ENCODE measurements at regions of chr19 and their contacts with region 1.

Region 1: DNA sequence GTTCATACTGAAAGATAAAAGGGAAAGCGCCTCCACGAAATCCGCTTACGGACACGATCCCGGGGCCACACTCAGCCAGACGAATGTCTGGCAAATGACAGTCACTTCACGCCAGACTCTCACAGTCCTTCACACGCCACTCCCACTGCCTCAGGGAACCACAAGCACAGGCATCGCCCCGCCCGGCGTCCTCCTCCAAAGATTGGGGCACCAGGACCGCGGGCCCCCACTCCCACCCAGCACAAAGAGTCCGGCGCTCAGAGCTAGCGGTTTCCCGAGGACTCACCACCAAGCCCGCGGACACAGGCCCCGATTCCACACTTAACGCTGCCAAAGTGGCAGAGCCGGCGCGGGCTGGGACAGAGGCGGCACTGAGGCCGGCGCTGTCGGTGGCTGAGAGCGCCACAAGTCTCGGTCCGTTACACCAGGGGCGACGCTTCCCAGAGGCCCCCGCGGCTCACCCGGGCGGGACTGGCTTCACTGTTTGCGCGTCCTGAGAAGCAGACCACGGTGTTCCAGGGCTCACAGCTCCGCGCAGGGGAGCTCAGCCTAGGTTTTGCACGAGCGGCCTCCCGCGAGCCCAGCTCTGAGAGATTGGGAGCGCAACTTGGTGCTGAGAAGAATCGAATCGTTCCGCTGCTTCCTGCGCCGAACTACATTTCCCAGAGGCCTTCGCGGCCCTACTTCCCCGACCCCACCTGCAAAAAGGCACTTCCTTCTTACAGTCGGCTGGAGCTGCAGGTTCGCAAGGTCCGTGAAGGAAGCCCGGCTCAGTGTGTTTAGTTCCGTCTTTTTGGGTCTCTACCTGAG is at the start of gene ZNF569:
- DNase-seq: peak; percentile 85
- H3K4me3 Mint-ChIP-seq: peak within 1 kb of the TSS; percentile 92
- H3K27ac Mint-ChIP-seq: peak within 1 kb of the TSS; percentile 93
- H3K4me1 Mint-ChIP-seq: peaks cover 27% of the 10 kb centered on the region
- H3K27me3 Mint-ChIP-seq: no peaks in the 10 kb centered on the region
- total RNA-seq, gene ZNF569: 2.7 and 3.7 TPM in 2 replicates

Region 2: GRCh38 chr19:36114763-36115452 is 1352.1 kb before region 1 on chr19 and contains the start of gene POLR2I:
- intact Hi-C with region 1: loop called (anchors 10 kb)
- DNase-seq: peak; percentile 98
- H3K4me3 Mint-ChIP-seq: peak within 1 kb of the TSS; percentile 98
- H3K27ac Mint-ChIP-seq: peak within 1 kb of the TSS; percentile 92
- H3K4me1 Mint-ChIP-seq: peaks cover 38% of the 10 kb centered on the region
- H3K27me3 Mint-ChIP-seq: peaks cover 1% of the 10 kb centered on the region
- total RNA-seq, gene POLR2I: 76.3 and 92.4 TPM in 2 replicates

Region 3: DNA sequence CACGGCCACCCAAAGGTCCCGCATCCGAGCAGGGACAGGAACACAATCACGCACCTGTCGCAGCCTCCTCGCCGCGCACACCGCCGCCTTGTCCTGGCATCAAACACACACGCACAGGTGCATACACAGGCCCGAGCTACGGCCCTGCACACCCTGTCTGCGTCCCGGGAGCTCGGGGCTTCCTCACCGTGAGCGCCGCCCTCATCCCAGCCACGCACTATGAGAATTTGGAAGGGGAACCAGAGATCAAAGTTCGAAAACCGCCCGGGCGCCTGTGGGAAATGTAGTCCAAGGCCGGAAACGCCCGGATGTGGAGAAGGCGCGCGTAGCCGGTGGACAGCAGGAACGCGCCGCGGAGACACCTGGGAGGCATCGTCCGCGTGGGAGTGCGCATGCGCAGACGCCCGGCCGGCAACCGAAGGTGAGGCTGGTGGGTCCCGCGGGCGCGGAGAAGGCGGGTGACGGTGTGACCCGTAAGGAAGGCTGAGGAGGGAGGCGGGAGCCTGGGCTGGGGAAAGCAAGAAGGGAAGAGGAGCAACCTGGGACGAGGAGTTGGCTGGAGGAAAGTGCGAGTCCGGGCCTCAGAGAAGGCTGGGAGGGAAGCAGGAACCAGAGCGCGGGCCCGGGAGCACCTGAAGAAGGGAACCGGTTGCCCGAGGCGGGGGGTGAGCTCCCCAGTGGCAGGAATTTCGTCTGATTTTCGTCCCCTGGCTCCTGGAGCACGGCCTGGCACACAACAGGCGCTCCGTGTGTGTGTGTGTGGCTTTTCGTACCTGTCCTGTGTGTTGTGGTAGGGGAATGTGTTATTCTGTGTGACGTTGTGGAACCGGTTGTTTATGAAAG is 779.6 kb before region 1 on chr19 and contains the start of gene ZNF567:
- intact Hi-C with region 1: loop called (anchors 1 kb)
- DNase-seq: peak; percentile 97
- H3K4me3 Mint-ChIP-seq: peak within 1 kb of the TSS; percentile 95
- H3K27ac Mint-ChIP-seq: peak within 1 kb of the TSS; percentile 91
- H3K4me1 Mint-ChIP-seq: peaks cover 24% of the 10 kb centered on the region
- H3K27me3 Mint-ChIP-seq: peaks cover 2% of the 10 kb centered on the region
- total RNA-seq, gene ZNF567: 5.8 and 8.5 TPM in 2 replicates

Region 4: DNA sequence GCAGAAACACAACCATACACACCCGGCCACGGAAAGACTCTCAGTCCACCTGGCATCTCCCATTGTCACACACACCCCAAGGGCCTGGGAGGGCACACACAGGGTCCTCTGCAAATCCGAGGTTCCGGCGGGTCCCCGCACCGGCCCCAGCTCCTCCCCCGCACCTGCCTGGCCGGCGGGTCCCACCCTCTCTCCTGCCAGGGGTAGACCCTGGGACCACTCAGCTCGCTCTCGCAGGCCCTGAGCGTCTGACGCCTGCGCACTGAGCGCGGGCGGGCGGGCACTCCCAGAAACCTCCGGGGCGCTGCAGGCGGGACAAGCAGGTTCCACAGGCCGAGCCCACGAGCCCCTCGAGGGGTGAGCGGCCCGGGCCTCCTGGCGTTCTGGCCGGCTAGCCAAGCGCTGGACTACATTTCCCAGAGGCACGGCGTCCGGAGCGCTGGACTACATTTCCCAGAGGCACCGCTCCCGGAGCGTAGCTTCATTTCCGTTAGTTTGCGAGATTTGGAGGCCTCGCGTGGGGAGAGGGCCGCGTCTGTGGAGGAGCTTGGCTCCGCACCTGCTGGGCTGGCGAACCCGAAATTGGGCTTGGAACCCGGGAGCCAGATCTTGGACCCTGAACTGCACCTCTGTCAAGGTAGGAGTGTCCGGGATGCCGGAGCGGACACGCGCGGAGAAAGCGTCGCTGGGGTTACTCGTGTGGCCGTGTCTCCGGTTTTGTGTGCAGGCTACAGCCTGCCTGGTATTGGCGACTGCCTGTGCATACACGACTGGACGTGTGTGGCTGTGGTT is 388.9 kb before region 1 on chr19 and contains the start of gene ZNF420:
- intact Hi-C with region 1: loop called (anchors 1 kb)
- DNase-seq: peak; percentile 85
- H3K4me3 Mint-ChIP-seq: peak within 1 kb of the TSS; percentile 93
- H3K27ac Mint-ChIP-seq: peak within 1 kb of the TSS; percentile 90
- H3K4me1 Mint-ChIP-seq: peaks cover 21% of the 10 kb centered on the region
- H3K27me3 Mint-ChIP-seq: no peaks in the 10 kb centered on the region
- total RNA-seq, gene ZNF420: 5.9 and 9.1 TPM in 2 replicates

Region 5: DNA sequence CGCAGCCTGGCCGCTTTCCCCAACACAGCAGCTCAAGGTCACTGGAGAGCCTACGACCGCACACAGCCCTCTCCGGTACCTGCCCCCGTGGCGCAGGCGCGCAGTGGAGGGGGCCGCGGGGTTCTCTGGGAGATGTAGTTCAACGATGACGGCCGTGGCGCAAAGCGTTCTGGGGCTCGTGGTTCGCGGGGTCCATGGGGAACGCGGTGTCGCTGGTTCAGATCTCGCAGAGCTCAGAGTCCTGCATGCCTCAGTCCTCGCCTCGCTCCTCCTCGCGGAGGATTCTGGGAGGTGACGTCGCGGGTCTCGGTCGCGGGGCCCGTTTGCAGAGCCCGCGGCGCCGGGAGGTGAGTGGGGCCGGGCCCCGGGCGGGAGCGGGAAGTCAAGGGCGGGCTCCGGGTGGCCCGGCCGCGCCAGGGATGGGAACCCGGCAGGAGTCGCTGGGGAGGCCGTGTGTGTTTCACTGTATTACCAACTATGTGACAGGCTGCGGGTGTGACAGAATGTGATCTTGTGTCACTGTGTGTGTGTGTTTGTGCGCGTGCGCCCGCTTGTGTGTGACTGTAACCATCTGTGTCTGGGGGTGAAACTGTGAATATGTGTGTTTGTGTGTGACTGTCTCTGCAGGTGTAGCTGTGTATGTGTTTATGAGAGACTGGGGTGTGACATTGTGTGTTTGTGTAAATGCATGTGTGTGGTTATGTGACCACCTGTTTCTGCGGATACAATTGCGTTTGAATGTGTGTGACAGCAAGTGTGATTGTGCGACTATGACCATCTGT is 95.9 kb before region 1 on chr19 and contains the start of gene ZNF527:
- intact Hi-C with region 1: loop called (anchors 1 kb)
- DNase-seq: peak; percentile 96
- H3K4me3 Mint-ChIP-seq: peak within 1 kb of the TSS; percentile 99
- H3K27ac Mint-ChIP-seq: peak within 1 kb of the TSS; percentile 87
- H3K4me1 Mint-ChIP-seq: peaks cover 13% of the 10 kb centered on the region
- H3K27me3 Mint-ChIP-seq: no peaks in the 10 kb centered on the region
- total RNA-seq, gene ZNF527: 3.9 and 4.5 TPM in 2 replicates

Region 6: DNA sequence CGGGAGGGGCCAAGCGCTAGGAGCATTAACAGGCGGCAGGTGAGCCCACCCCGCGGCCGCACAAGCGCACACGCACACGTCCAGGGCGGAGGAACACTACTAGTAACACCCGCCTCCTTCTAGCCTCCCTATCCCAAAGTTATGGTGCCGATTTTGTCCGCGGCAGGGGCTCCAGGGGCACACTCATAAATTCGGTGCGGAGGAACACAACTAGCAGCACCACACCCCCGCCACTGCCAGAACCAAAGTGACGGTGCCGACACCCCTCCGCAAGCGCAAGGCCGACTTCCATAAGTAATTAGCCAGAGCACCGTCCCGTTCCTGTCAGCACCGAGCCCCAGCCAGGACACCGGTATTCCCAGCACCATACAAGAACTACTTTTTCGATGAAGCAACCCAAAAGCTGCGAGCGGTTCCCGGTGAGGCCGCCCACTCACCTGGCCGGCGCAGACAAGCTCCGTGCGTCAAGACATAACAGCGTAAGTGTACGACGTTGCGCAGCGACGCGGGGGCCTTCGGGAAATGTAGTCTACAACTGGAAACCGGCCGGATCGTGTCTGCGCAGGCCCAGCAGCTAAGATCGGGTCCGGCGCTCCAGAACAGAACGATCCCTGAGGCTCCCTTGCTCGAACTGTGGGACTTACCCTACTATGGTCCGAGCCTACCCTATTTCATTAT is 127.4 kb after region 1 on chr19 and contains the starts of genes ZNF540 and ZNF571:
- intact Hi-C with region 1: loop called (anchors 1 kb)
- DNase-seq: peak; percentile 81
- H3K4me3 Mint-ChIP-seq: peak within 1 kb of the TSS; percentile 88
- H3K27ac Mint-ChIP-seq: peak within 1 kb of the TSS; percentile 91
- H3K4me1 Mint-ChIP-seq: peaks cover 24% of the 10 kb centered on the region
- H3K27me3 Mint-ChIP-seq: no peaks in the 10 kb centered on the region
- total RNA-seq, gene ZNF540: 0.39 and 0.70 TPM in 2 replicates
- total RNA-seq, gene ZNF571: 0.64 and 1.4 TPM in 2 replicates

Region 7: GRCh38 chr19:37691881-37692504 is 225.0 kb after region 1 on chr19:
- intact Hi-C with region 1: no loop called
- DNase-seq: peak; percentile 46
- H3K4me3 Mint-ChIP-seq: peak overlapping the region; percentile 90
- H3K27ac Mint-ChIP-seq: peak overlapping the region; percentile 67
- H3K4me1 Mint-ChIP-seq: peaks cover 7% of the 10 kb centered on the region
- H3K27me3 Mint-ChIP-seq: no peaks in the 10 kb centered on the region

Region 8: GRCh38 chr19:37719111-37719926 is 252.3 kb after region 1 on chr19 and contains the start of gene ZNF607:
- intact Hi-C with region 1: loop called (anchors 1 kb)
- DNase-seq: peak; percentile 67
- H3K4me3 Mint-ChIP-seq: peak within 1 kb of the TSS; percentile 87
- H3K27ac Mint-ChIP-seq: peak within 1 kb of the TSS; percentile 67
- H3K4me1 Mint-ChIP-seq: peaks cover 9% of the 10 kb centered on the region
- H3K27me3 Mint-ChIP-seq: no peaks in the 10 kb centered on the region
- total RNA-seq, gene ZNF607: 1.9 and 2.4 TPM in 2 replicates

Measured in activated T-helper 1 cell treated with anti-CD3 and anti-CD28 coated beads, Interleukin-12 subunit alpha, Interleukin-12 subunit beta, Interleukin-2, Interleukin-4 antibody, amounts not matched to agents 30 ng/mL and 10 ng/mL and 1 ng/mL, durations not matched to agents 14 hours and 24 hours and 36 hours (primary cell).